ENCODE measurements at regions of chr4 and their contacts with region 1.

Region 1: GRCh38 chr4:22500831-22501719 is 14.8 kb downstream of the ADGRA3 start:
- DNase-seq: peak; percentile 72
- H3K4me3 Mint-ChIP-seq: no peak overlapping the region
- H3K27ac Mint-ChIP-seq: no peak overlapping the region
- H3K4me1 Mint-ChIP-seq: peaks cover 41% of the 10 kb centered on the region
- H3K27me3 Mint-ChIP-seq: no peaks in the 10 kb centered on the region
- CTCF ChIP-seq: no peak

Region 2: DNA sequence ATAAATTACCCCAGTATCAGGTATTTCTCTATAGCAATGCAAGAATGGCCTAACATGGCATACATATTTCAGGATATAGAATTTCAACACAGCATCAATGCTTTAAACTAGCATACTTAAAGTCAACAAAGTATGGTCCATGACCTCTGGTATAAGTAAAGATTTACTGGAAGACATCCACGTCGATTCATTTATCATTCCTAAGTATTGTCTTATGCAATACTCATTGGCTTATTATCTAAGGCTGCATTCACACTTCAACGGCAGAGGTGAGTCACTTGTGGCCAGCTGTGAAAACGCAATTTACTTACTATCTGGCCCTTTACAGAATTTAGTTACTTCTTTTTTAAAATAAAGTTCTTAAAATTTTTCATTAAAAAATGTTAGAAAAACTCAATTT is 27.8 kb before region 1 on chr4:
- CTCF ChIA-PET with region 1: interaction called, 4 read pairs
- intact Hi-C with region 1: loop called (anchors 2 kb)
- DNase-seq: no peak
- H3K4me3 Mint-ChIP-seq: no peak overlapping the region
- H3K27ac Mint-ChIP-seq: no peak overlapping the region
- H3K4me1 Mint-ChIP-seq: peaks cover 34% of the 10 kb centered on the region
- H3K27me3 Mint-ChIP-seq: no peaks in the 10 kb centered on the region
- CTCF ChIP-seq: no peak

Region 3: GRCh38 chr4:22515145-22515887 is 14.2 kb after region 1 on chr4:
- CTCF ChIA-PET with region 1: interaction called, 6 read pairs
- intact Hi-C with region 1: loop called (anchors 2 kb)
- DNase-seq: peak; percentile 70
- H3K4me3 Mint-ChIP-seq: peak overlapping the region; percentile 97
- H3K27ac Mint-ChIP-seq: peak overlapping the region; percentile 89
- H3K4me1 Mint-ChIP-seq: peaks cover 26% of the 10 kb centered on the region
- H3K27me3 Mint-ChIP-seq: no peaks in the 10 kb centered on the region
- CTCF ChIP-seq: no peak

Region 4: DNA sequence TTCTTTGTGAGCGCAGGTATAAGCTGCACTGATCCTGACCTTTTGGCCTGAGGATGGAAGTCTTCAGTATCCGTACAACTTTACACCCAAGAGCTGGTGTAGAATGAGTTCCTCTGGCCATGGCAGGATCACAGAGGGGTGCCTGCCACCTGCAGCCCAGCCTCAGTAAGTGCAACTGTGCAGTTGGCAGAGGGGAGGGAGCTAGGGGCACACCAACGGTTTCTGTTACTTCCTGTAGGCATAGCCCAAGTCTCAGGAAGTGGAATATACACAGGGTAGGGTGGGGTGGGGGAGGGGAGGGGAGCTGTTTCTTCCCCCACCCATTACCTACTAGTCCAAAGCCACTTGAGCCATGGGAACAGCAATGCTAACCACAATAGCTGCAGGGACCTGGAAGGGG is 106.3 kb after region 1 on chr4:
- CTCF ChIA-PET with region 1: interaction called, 4 read pairs
- intact Hi-C with region 1: loop called (anchors 5 kb)
- DNase-seq: peak; percentile 66
- H3K4me3 Mint-ChIP-seq: no peak overlapping the region
- H3K27ac Mint-ChIP-seq: no peak overlapping the region
- H3K4me1 Mint-ChIP-seq: peaks cover 14% of the 10 kb centered on the region
- H3K27me3 Mint-ChIP-seq: no peaks in the 10 kb centered on the region
- CTCF ChIP-seq: peak; percentile 58

Region 5: DNA sequence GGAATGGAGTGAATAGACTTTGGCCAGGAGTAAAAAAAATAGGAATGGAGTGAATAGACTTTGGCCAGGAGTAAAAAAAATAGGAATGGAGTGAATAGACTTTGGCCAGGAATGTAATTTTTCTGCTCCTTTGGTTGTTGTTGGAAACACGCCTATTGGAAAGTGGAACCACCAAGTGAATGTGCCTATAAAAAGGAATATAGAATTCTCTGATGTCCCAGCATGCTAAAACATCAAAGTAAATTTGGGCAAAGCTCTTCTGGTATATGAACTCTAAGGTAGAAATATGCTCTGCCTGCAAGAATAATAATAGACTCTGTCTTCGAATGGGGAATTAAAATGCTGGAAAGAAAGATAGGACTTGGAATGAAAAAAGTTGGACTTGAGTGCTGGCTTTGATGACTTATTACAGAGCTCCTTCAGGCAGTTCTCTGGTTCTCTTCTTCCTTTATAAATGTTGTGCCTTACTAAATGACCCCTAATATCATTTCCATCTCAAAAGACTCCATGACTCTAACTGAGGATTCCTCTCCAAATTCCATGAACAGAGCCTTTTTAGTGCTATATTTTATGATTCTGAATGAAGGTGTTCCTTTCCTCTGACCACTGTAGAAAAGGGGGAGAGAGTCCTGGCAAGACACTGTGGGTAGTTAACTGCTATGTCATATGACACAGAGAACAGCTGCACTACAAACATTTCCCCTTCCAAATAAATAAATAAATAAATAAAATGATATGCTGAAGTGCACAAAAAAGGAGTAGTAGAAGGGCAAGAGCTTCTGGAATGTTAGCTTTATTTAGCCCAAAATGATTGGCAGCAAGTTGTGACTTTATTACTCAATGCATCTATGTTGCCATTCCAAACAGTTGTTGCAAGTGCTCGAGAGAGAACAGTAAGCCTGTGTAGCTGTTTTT is 178.1 kb after region 1 on chr4:
- CTCF ChIA-PET with region 1: no interaction called
- intact Hi-C with region 1: no loop called
- DNase-seq: no peak
- H3K4me3 Mint-ChIP-seq: no peak overlapping the region
- H3K27ac Mint-ChIP-seq: no peak overlapping the region
- H3K4me1 Mint-ChIP-seq: no peaks in the 10 kb centered on the region
- H3K27me3 Mint-ChIP-seq: no peaks in the 10 kb centered on the region
- CTCF ChIP-seq: no peak

Region 6: GRCh38 chr4:22720091-22720490 is 219.0 kb after region 1 on chr4:
- CTCF ChIA-PET with region 1: no interaction called
- intact Hi-C with region 1: no loop called
- DNase-seq: no peak
- H3K4me3 Mint-ChIP-seq: no peak overlapping the region
- H3K27ac Mint-ChIP-seq: no peak overlapping the region
- H3K4me1 Mint-ChIP-seq: no peaks in the 10 kb centered on the region
- H3K27me3 Mint-ChIP-seq: no peaks in the 10 kb centered on the region
- CTCF ChIP-seq: no peak

Measured in Calu3 (cell line).